ENCODE measurements at regions of chr16 and their contacts with region 1.

Region 1: DNA sequence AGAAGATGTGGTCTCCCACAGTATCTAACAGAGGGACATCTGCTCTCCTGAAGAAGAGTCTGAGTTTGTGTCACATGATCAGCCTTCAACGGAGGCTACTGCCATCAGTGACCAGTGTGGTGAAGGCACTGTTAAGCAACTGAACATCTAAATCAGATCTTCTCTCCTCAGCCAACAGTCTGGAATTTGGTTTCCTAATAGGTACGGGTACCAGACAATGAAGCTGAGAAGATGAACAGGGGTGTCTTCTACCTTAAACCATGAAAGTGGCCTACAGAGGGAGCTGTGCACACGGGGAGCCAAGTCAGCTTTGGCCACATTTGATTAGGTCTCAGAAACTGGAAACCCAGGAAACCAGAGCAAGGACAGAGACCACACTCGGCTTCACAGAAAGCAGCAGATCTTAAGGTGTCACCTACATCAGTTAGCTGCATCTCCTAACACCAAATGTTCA is 41.8 kb downstream of the BRD7 start:
- DNase-seq: peak; percentile 61 to 71 (median 65)
- H3K4me3 ChIP-seq: no peak overlapping the region
- H3K27ac ChIP-seq: no peak overlapping the region
- H3K4me1 ChIP-seq: peaks cover 0 to 18% (median 4%) of the 10 kb centered on the region in 4 experiments
- H3K27me3 ChIP-seq: no peaks in the 10 kb centered on the region

Region 2: DNA sequence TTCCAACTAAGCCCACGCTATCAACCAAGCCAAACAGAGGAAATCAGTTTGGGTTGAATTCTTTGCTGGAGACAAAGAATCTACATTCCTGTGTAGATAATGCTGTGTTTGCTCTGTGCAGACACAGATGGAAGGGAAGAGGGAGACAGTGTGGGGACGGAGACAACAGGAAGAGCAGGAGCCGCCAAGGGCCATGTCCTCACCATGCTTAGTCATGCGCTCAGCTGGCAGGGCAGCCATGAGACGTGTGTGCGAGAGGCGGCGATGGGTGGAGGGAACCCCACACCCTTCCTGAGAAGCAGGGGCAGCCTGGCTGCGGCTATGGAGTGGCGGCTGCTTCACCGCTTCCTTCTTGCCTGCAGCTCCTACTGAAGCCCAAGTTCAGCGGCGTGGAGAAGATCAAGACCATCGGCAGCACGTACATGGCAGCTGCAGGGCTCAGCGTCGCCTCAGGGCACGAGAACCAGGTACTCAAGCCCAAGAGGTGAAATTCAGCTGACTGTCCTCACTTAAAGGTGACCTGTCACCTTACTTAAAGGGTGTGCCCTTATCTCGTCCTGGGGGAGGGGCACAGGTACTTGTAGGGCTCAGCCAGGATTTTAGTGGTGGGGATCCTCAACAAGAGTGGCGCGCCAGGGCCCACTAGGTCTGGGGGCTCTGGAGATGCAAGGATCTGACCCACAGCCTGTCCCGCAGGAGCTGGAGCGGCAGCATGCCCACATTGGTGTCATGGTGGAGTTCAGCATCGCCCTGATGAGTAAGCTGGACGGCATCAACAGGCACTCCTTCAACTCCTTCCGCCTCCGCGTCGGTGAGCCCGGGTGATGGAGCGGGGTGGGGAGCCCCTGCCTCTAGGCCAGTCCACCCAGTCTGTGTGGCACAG is 13.1 kb before region 1 on chr16:
- CTCF ChIA-PET with region 1: interaction called, 45 read pairs
- POLR2A ChIA-PET with region 1: no interaction called
- DNase-seq: peak; percentile 51 to 84 (median 81)
- H3K4me3 ChIP-seq: peak overlapping the region in 2 of 7 experiments; percentile 20 to 43
- H3K27ac ChIP-seq: peak overlapping the region in 1 of 2 experiments; percentile 59
- H3K4me1 ChIP-seq: peaks cover 0 to 21% (median 10%) of the 10 kb centered on the region in 4 experiments
- H3K27me3 ChIP-seq: no peaks in the 10 kb centered on the region

Region 3: DNA sequence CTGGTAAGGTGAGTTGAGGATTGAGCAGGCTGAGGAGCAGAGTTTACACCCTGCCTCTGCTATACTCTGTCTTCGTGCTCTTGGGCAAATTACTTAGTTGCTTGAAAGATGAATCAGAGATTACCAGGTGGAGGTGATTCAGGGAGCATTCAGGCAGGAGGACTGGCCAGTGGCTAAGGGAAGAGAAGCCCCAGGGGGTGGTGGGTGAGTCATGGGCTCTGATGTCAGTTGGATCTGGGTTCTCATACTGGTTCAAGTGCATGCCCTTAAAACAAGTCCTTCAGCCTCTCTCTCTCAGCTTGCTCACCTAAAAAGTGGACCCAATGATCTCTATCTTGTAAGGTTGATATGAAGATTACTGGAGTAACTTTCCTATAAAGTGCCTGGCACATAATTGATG is 70.2 kb after region 1 on chr16:
- CTCF ChIA-PET with region 1: no interaction called
- POLR2A ChIA-PET with region 1: no interaction called
- DNase-seq: no peak
- H3K4me3 ChIP-seq: no peak overlapping the region
- H3K27ac ChIP-seq: no peak overlapping the region
- H3K4me1 ChIP-seq: peaks cover 0 to 8% (median 0%) of the 10 kb centered on the region in 4 experiments
- H3K27me3 ChIP-seq: peaks cover 0 to 3% (median 0%) of the 10 kb centered on the region in 5 experiments